Colonic mucosa (tissue), 4 donors: ENCODE measurements at regions of chr6 and their contacts with region 1.

Region 1: GRCh38 chr6:4155848-4156466 is 20.6 kb upstream of the ECI2 start:
- DNase-seq: peak; percentile 86
- H3K4me3 ChIP-seq: no peak overlapping the region
- H3K27ac ChIP-seq: no peak overlapping the region
- H3K4me1 ChIP-seq: no peaks in the 10 kb centered on the region
- H3K27me3 ChIP-seq: no peaks in the 10 kb centered on the region
- CTCF ChIP-seq: peak; percentile 87

Region 2: DNA sequence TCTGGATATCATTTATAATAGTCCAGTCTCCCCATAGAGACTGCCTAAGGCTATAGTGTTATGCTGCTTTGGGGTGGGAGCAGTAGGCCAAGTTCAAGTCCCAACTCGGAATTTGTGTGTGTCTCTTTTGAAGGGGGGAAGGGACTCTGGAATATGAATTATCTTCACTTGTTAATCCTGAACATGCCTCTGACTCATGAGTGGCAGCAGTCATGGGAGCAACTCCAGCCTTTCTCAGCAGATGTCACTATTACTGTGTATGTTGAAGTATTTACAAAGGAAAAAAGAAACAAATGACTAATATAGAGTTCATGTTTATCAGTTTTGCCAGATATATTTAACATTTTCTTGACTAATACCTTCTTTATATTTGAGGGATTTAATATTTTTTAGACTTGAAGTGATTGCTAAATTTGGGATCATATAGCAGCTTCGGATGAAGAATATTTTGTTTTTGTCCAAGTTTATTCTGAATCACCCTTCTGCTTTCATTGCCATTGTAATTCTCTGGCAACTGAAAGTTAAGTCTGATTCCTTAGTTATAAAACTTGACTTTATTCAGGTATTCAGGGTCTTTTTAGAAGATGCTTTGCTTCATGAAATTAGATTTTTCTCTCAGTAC is 100.4 kb before region 1 on chr6:
- intact Hi-C with region 1: loop called (anchors 5 kb)
- DNase-seq: no peak
- H3K4me3 ChIP-seq: no peak overlapping the region
- H3K27ac ChIP-seq: no peak overlapping the region
- H3K4me1 ChIP-seq: no peaks in the 10 kb centered on the region
- H3K27me3 ChIP-seq: no peaks in the 10 kb centered on the region
- CTCF ChIP-seq: peak; percentile 37